WTC11 (cell line): ENCODE measurements at regions of chr10 and their contacts with region 1.

Region 1: DNA sequence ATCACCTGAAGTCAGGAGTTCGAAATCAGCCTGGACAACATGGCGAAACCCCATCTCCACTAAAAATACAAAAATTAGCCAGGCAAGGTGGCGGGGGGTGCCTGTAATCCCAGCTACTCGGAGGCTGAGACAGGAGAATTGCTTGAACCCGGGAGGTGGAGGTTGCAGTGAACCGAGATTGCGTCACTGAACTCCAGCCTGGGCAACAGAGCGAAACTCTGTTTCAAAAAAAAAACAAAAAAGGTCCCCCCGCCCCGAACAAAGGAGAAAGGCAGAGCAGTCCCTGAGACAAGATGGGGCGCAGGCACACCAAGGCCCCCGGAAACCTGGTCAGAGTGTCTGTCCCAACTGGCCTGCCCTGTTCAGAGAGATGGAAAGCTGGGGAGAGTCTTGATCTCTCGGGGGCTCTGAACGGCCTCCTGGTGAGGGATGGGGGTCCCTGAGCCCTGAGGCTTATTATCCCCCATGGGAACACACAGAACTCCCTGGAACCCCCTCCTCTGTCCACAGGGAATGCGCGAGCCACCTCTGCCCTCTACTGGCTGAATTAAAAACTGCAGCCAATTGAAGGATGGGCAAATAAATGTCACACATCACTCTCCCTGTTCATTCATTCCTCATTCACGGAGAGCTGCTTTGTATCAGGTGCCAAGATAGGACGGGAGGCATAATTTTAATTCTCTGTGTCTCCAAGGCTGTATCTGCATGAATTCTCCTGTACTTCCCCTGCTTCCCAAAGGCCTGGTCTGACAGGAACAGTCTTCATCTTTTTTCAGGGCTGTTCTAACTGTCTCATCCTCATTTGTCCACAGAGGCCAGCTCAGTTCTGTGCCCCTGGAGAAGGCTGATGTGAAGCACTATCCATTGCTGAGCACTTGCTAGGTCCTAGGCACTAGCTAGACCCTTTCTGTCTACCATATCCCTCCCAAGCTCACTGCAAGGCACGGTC is 28.9 kb downstream of the MAT1A start:
- DNase-seq: peak; percentile 70
- ATAC-seq: peak; percentile 26
- H3K4me3 Mint-ChIP-seq: no peak overlapping the region
- H3K27ac Mint-ChIP-seq: no peak overlapping the region
- H3K4me1 Mint-ChIP-seq: peaks cover 17% of the 10 kb centered on the region
- H3K27me3 Mint-ChIP-seq: peaks cover 15% of the 10 kb centered on the region
- CTCF ChIP-seq: peak; percentile 79

Region 2: GRCh38 chr10:80132299-80133139 is 128.1 kb before region 1 on chr10 and contains the start of gene PLAC9:
- CTCF ChIA-PET with region 1: interaction called, 11 read pairs
- POLR2A ChIA-PET with region 1: no interaction called
- DNase-seq: peak; percentile 63
- ATAC-seq: peak; percentile 73
- H3K4me3 Mint-ChIP-seq: peak within 1 kb of the TSS; percentile 74
- H3K27ac Mint-ChIP-seq: no peak within 1 kb of the TSS
- H3K4me1 Mint-ChIP-seq: peaks cover 21% of the 10 kb centered on the region
- H3K27me3 Mint-ChIP-seq: peaks cover 31% of the 10 kb centered on the region
- CTCF ChIP-seq: no peak
- total RNA-seq, gene PLAC9: 4.6 to 7.3 TPM (median 6.6 TPM) in 3 replicates

Region 3: GRCh38 chr10:80272793-80273517 is 12.4 kb after region 1 on chr10:
- CTCF ChIA-PET with region 1: interaction called, 10 read pairs
- POLR2A ChIA-PET with region 1: no interaction called
- DNase-seq: no peak
- ATAC-seq: no peak
- H3K4me3 Mint-ChIP-seq: no peak overlapping the region
- H3K27ac Mint-ChIP-seq: no peak overlapping the region
- H3K4me1 Mint-ChIP-seq: peaks cover 5% of the 10 kb centered on the region; the same call in 1 of the 2 replicates
- H3K27me3 Mint-ChIP-seq: no peaks in the 10 kb centered on the region; the same call in 1 of the 2 replicates
- CTCF ChIP-seq: no peak